GM12878 (cell line): ENCODE measurements at regions of chrX and their contacts with region 1.

Region 1: GRCh38 chrX:119791438-119792231 is at the start of gene RPL39:
- DNase-seq: peak; percentile 51
- ATAC-seq: peak; percentile 90
- H3K4me3 ChIP-seq: peak within 1 kb of the TSS; percentile 76
- H3K27ac ChIP-seq: peak within 1 kb of the TSS; percentile 90
- H3K4me1 ChIP-seq: no peaks in the 10 kb centered on the region; the same call in 1 of the 2 replicates
- H3K27me3 ChIP-seq: no peaks in the 10 kb centered on the region
- CTCF ChIP-seq: no peak
- EP300 ChIP-seq: no peak
- POLR2A ChIP-seq: peak; percentile 96
- RAD21 ChIP-seq: no peak
- polyA plus RNA-seq, gene RPL39: 4,146 to 5,350 TPM

Region 2: DNA sequence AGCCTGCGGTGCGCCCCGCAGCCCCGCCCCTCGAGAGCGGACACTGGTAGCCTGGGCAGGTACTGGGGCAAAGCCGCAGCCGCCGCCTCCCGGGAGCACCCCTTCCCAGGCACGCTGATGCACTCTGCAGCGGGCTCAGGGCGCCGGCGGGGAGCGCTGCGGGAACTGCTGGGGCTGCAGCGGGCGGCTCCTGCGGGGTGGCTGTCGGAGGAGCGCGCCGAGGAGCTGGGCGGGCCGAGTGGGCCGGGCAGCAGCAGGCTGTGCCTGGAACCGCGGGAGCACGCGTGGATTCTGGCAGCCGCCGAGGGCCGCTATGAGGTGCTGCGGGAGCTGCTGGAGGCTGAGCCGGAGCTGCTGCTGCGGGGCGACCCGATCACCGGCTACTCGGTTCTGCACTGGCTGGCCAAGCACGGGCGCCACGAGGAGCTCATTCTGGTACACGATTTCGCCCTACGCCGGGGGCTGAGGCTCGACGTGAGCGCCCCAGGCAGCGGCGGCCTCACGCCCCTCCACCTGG is 32.8 kb before region 1 on chrX:
- CTCF ChIA-PET with region 1: interaction called, 10 read pairs
- POLR2A ChIA-PET with region 1: interaction called, 14 read pairs
- RAD21 ChIA-PET with region 1: interaction called, 14 read pairs
- SMC1A ChIA-PET with region 1: interaction called, 9 read pairs
- in situ Hi-C with region 1: no loop called
- intact Hi-C with region 1: no loop called
- DNase-seq: no peak
- ATAC-seq: peak; percentile 9
- H3K4me3 ChIP-seq: peak overlapping the region; percentile 64
- H3K27ac ChIP-seq: no peak overlapping the region
- H3K4me1 ChIP-seq: peaks cover 44% of the 10 kb centered on the region
- H3K27me3 ChIP-seq: no peaks in the 10 kb centered on the region
- CTCF ChIP-seq: no peak
- EP300 ChIP-seq: no peak
- POLR2A ChIP-seq: no peak
- RAD21 ChIP-seq: no peak

Region 3: GRCh38 chrX:119826399-119826959 is 34.8 kb after region 1 on chrX:
- CTCF ChIA-PET with region 1: interaction called, 3 read pairs
- POLR2A ChIA-PET with region 1: interaction called, 11 read pairs
- RAD21 ChIA-PET with region 1: interaction called, 9 read pairs
- SMC1A ChIA-PET with region 1: interaction called, 9 read pairs
- in situ Hi-C with region 1: no loop called
- intact Hi-C with region 1: no loop called
- DNase-seq: no peak
- ATAC-seq: peak; percentile 51
- H3K4me3 ChIP-seq: no peak overlapping the region
- H3K27ac ChIP-seq: no peak overlapping the region
- H3K4me1 ChIP-seq: no peaks in the 10 kb centered on the region
- H3K27me3 ChIP-seq: no peaks in the 10 kb centered on the region
- CTCF ChIP-seq: no peak
- EP300 ChIP-seq: no peak
- POLR2A ChIP-seq: no peak
- RAD21 ChIP-seq: no peak

Region 4: GRCh38 chrX:119871599-119872395 is 80.2 kb after region 1 on chrX and contains the starts of genes NDUFA1 and RNF113A:
- CTCF ChIA-PET with region 1: interaction called, 7 read pairs
- POLR2A ChIA-PET with region 1: interaction called, 14 read pairs
- RAD21 ChIA-PET with region 1: interaction called, 21 read pairs
- SMC1A ChIA-PET with region 1: interaction called, 7 read pairs
- in situ Hi-C with region 1: no loop called
- intact Hi-C with region 1: no loop called
- DNase-seq: peak; percentile 59
- ATAC-seq: peak; percentile 95
- H3K4me3 ChIP-seq: peak within 1 kb of the TSS; percentile 68
- H3K27ac ChIP-seq: peak within 1 kb of the TSS; percentile 91
- H3K4me1 ChIP-seq: no peaks in the 10 kb centered on the region
- H3K27me3 ChIP-seq: no peaks in the 10 kb centered on the region
- CTCF ChIP-seq: no peak
- EP300 ChIP-seq: no peak
- POLR2A ChIP-seq: peak; percentile 96
- RAD21 ChIP-seq: no peak
- polyA plus RNA-seq, gene NDUFA1: 999 to 1,113 TPM
- polyA plus RNA-seq, gene RNF113A: 22.7 to 23.1 TPM

Region 5: DNA sequence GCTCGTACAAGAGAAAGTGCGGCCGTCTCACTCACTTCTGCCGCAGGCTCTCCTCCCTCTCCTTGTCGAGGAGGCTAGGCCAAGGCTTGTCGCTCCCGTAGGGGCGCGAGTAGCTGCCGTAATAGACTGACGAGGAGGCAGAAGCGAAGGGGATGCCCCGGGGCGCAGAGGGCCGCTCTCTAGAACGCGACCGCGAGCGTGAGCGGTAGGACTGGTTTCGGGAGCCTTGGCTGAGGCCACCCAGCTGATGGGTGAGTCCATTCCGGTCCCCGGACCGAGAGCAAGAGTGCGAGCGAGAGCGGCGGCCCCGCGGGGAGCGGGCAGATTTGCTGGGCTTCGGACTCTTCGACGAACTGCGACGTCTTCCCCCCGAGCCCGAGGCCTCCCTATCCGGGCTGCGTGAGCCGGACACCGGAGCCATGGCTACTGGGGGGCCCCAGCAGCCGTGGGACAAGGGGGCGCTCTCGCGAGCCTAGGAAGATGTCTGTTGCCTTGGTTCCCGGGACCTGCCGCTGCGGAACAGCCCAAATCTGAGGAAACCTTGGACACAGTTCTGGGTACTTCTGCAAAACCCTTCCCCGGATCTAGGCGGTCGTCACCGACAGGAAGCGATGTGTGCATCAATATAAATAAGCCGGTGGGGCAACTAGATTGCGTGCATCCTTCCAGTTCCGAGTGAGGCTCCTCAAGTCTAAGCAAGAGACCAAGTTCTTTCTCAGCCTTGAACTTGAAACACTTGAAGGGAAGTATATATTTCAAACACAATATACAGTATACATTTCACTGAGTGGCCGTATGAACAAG is 151.8 kb after region 1 on chrX and contains the start of gene NKAP:
- CTCF ChIA-PET with region 1: interaction called, 3 read pairs
- POLR2A ChIA-PET with region 1: no interaction called
- RAD21 ChIA-PET with region 1: no interaction called
- SMC1A ChIA-PET with region 1: no interaction called
- in situ Hi-C with region 1: no loop called
- intact Hi-C with region 1: loop called (anchors 5 kb)
- DNase-seq: peak; percentile 73
- ATAC-seq: peak; percentile 91
- H3K4me3 ChIP-seq: peak within 1 kb of the TSS; percentile 62
- H3K27ac ChIP-seq: peak within 1 kb of the TSS; percentile 41
- H3K4me1 ChIP-seq: no peaks in the 10 kb centered on the region
- H3K27me3 ChIP-seq: no peaks in the 10 kb centered on the region; a peak in 1 of 4 replicates
- CTCF ChIP-seq: no peak
- EP300 ChIP-seq: no peak
- POLR2A ChIP-seq: peak; percentile 63
- RAD21 ChIP-seq: no peak
- polyA plus RNA-seq, gene NKAP: 2.4 to 5.2 TPM